ENCODE measurements at regions of chr10 and their contacts with region 1.

Region 1: GRCh38 chr10:102072673-102073527 is 7.8 kb downstream of the HPS6 start:
- DNase-seq: peak; percentile 73
- ATAC-seq: peak; percentile 99
- H3K4me3 ChIP-seq: no peak overlapping the region
- H3K27ac ChIP-seq: no peak overlapping the region
- H3K4me1 ChIP-seq: no peaks in the 10 kb centered on the region
- H3K27me3 ChIP-seq: no peaks in the 10 kb centered on the region
- CTCF ChIP-seq: peak; percentile 90
- POLR2A ChIP-seq: no peak
- RAD21 ChIP-seq: peak; percentile 88

Region 2: GRCh38 chr10:101889256-101890210 is 183.4 kb before region 1 on chr10:
- CTCF ChIA-PET with region 1: interaction called, 3 read pairs
- POLR2A ChIA-PET with region 1: no interaction called
- dilution Hi-C with region 1: no loop called
- in situ Hi-C with region 1: no loop called
- intact Hi-C with region 1: loop called (anchors 1 kb)
- DNase-seq: peak; percentile 78
- ATAC-seq: peak; percentile 97
- H3K4me3 ChIP-seq: no peak overlapping the region
- H3K27ac ChIP-seq: no peak overlapping the region
- H3K4me1 ChIP-seq: no peaks in the 10 kb centered on the region
- H3K27me3 ChIP-seq: no peaks in the 10 kb centered on the region
- CTCF ChIP-seq: peak; percentile 90
- POLR2A ChIP-seq: no peak
- RAD21 ChIP-seq: peak; percentile 87

Region 3: GRCh38 chr10:101938316-101939281 is 134.3 kb before region 1 on chr10:
- CTCF ChIA-PET with region 1: no interaction called
- POLR2A ChIA-PET with region 1: no interaction called
- dilution Hi-C with region 1: no loop called
- in situ Hi-C with region 1: no loop called
- intact Hi-C with region 1: no loop called
- DNase-seq: peak; percentile 93
- ATAC-seq: peak; percentile 75
- H3K4me3 ChIP-seq: no peak overlapping the region
- H3K27ac ChIP-seq: peak overlapping the region; percentile 93
- H3K4me1 ChIP-seq: peaks cover 39% of the 10 kb centered on the region
- H3K27me3 ChIP-seq: no peaks in the 10 kb centered on the region
- CTCF ChIP-seq: no peak
- POLR2A ChIP-seq: no peak
- RAD21 ChIP-seq: 0 out of 2 replicates have a peak, but pooled peaks have one; percentile 7

Region 4: GRCh38 chr10:102016416-102016815 is 56.5 kb before region 1 on chr10:
- CTCF ChIA-PET with region 1: interaction called, 3 read pairs
- POLR2A ChIA-PET with region 1: no interaction called
- dilution Hi-C with region 1: no loop called
- in situ Hi-C with region 1: no loop called
- intact Hi-C with region 1: loop called (anchors 2 kb)
- DNase-seq: no peak
- ATAC-seq: no peak
- H3K4me3 ChIP-seq: no peak overlapping the region
- H3K27ac ChIP-seq: no peak overlapping the region
- H3K4me1 ChIP-seq: no peaks in the 10 kb centered on the region
- H3K27me3 ChIP-seq: no peaks in the 10 kb centered on the region
- CTCF ChIP-seq: no peak
- POLR2A ChIP-seq: no peak
- RAD21 ChIP-seq: no peak

Region 5: GRCh38 chr10:102040305-102041050 is 32.4 kb before region 1 on chr10:
- CTCF ChIA-PET with region 1: interaction called, 6 read pairs
- POLR2A ChIA-PET with region 1: no interaction called
- dilution Hi-C with region 1: no loop called
- in situ Hi-C with region 1: no loop called
- intact Hi-C with region 1: loop called (anchors 2 kb)
- DNase-seq: peak; percentile 25
- ATAC-seq: no peak
- H3K4me3 ChIP-seq: no peak overlapping the region
- H3K27ac ChIP-seq: no peak overlapping the region
- H3K4me1 ChIP-seq: peaks cover 2% of the 10 kb centered on the region; the same call in 1 of the 2 replicates
- H3K27me3 ChIP-seq: no peaks in the 10 kb centered on the region
- CTCF ChIP-seq: no peak
- POLR2A ChIP-seq: no peak
- RAD21 ChIP-seq: no peak

Measured in IMR-90 (cell line).